Activated CD4-positive, alpha-beta T cell treated with anti-CD3 and anti-CD28 coated beads for 36 hours (primary cell): ENCODE measurements at regions of chr18 and their contacts with region 1.

Region 1: DNA sequence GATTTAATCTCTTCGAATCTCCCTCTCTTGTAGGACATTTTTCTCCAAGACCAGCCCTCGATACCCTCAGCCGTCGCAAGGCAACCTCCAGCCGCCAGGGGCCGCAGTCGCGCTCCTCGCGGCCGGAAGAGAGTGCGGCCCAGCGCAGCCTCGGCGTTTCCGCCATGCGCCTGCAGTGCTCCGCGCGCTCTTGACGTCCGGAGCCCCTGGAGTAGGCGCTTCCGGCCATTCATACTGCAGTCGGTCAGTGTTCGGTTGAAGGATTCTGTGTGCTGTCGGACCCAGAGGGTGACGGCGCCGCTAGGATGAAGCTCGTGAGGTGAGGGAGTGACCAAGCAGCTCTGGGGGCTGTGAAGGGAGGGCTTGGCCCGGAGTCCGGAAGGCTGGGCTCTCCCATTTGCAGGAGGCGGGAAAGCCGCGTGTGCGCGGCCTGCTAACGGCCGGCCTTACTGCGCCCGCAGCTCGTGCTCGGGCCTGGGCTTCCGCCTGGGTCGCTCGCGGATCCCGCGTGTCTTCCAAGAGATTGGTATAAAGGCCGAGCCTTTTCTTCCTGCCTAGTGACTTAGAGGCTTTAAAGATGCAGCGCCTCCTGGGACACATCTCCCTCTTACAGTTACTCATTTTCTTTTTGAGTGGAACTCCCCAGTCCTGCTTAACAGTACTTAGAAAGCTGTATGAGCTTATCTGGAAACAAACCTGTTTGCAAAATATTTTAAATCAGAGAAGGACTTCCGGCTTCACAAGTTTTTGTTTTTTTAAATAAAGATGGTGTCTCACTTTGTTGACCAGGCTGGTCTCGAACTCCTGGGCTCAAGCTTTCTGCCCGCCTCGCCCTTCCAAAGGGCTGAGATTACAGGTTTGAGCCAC is at the start of gene SNRPD1:
- DNase-seq: peak; percentile 93
- ATAC-seq: peak; percentile 98
- H3K4me3 Mint-ChIP-seq: peak within 1 kb of the TSS; percentile 92
- H3K27ac Mint-ChIP-seq: peak within 1 kb of the TSS; percentile 99
- H3K4me1 Mint-ChIP-seq: peaks cover 34% of the 10 kb centered on the region
- H3K27me3 Mint-ChIP-seq: no peaks in the 10 kb centered on the region
- total RNA-seq, gene SNRPD1: 79.9 to 163 TPM

Region 2: GRCh38 chr18:21629089-21629832 is 16.9 kb after region 1 on chr18:
- CTCF ChIA-PET with region 1: interaction called, 6 read pairs
- POLR2A ChIA-PET with region 1: interaction called, 5 read pairs
- intact Hi-C with region 1: loop called in 1 of 2 experiments (anchors 2 kb)
- DNase-seq: no peak
- ATAC-seq: no peak
- H3K4me3 Mint-ChIP-seq: no peak overlapping the region
- H3K27ac Mint-ChIP-seq: peak overlapping the region; percentile 84
- H3K4me1 Mint-ChIP-seq: peaks cover 11% of the 10 kb centered on the region
- H3K27me3 Mint-ChIP-seq: no peaks in the 10 kb centered on the region

Region 3: DNA sequence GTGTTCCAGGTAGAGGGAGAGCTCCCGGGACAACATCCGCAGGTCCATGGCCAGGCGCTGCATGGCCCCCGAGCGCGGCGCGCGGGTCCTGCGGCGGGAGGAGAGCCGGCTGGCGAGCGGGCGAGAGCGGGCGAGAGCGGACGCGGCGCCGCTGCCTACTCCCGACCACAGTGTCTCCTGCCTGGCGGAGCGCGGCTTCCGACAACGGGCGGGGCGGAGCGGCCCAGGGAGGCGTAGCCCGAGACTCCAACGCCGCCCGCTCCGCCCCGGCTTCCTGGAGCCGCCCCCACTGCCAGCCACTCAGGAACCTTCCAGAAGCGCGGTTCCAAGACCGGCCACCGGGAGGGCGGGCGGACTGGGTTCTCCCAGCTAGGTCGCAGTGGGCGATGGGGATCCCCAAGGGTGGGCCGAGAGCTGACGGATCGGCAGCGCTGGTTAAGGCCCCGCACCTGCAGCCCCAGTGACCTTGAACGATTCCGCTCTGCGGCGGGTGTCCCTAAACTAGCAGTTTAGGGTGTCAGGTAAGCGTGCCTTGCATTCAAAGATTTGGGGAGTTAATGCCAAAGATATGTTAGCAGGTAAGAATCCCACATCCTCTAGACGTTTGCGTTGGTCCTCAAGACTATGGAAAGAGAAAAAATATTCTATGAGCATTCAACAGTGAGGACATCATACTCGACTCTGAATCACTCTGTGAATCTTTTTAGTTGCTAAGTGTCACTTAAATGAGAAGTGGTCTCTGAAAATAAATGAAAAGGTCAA is 92.4 kb after region 1 on chr18 and contains the start of gene ABHD3:
- CTCF ChIA-PET with region 1: interaction called, 12 read pairs
- POLR2A ChIA-PET with region 1: no interaction called
- intact Hi-C with region 1: loop called (anchors 1 to 2 kb)
- DNase-seq: peak; percentile 93
- ATAC-seq: peak; percentile 95
- H3K4me3 Mint-ChIP-seq: peak within 1 kb of the TSS; percentile 87
- H3K27ac Mint-ChIP-seq: peak within 1 kb of the TSS; percentile 93
- H3K4me1 Mint-ChIP-seq: peaks cover 24% of the 10 kb centered on the region
- H3K27me3 Mint-ChIP-seq: no peaks in the 10 kb centered on the region
- total RNA-seq, gene ABHD3: 13.7 to 14.3 TPM

Region 4: GRCh38 chr18:21740724-21741510 is 128.6 kb after region 1 on chr18 and contains the start of gene MIB1:
- CTCF ChIA-PET with region 1: interaction called, 7 read pairs
- POLR2A ChIA-PET with region 1: no interaction called
- intact Hi-C with region 1: loop called (anchors 1 kb)
- DNase-seq: peak; percentile 62
- ATAC-seq: peak; percentile 73
- H3K4me3 Mint-ChIP-seq: peak within 1 kb of the TSS; percentile 93
- H3K27ac Mint-ChIP-seq: peak within 1 kb of the TSS; percentile 96
- H3K4me1 Mint-ChIP-seq: peaks cover 40% of the 10 kb centered on the region
- H3K27me3 Mint-ChIP-seq: no peaks in the 10 kb centered on the region
- total RNA-seq, gene MIB1: 24.7 to 33.6 TPM

Region 5: GRCh38 chr18:21865043-21865442 is 252.7 kb after region 1 on chr18:
- CTCF ChIA-PET with region 1: no interaction called
- POLR2A ChIA-PET with region 1: no interaction called
- intact Hi-C with region 1: no loop called
- DNase-seq: no peak
- ATAC-seq: no peak
- H3K4me3 Mint-ChIP-seq: no peak overlapping the region
- H3K27ac Mint-ChIP-seq: no peak overlapping the region
- H3K4me1 Mint-ChIP-seq: no peaks in the 10 kb centered on the region
- H3K27me3 Mint-ChIP-seq: no peaks in the 10 kb centered on the region

Region 6: DNA sequence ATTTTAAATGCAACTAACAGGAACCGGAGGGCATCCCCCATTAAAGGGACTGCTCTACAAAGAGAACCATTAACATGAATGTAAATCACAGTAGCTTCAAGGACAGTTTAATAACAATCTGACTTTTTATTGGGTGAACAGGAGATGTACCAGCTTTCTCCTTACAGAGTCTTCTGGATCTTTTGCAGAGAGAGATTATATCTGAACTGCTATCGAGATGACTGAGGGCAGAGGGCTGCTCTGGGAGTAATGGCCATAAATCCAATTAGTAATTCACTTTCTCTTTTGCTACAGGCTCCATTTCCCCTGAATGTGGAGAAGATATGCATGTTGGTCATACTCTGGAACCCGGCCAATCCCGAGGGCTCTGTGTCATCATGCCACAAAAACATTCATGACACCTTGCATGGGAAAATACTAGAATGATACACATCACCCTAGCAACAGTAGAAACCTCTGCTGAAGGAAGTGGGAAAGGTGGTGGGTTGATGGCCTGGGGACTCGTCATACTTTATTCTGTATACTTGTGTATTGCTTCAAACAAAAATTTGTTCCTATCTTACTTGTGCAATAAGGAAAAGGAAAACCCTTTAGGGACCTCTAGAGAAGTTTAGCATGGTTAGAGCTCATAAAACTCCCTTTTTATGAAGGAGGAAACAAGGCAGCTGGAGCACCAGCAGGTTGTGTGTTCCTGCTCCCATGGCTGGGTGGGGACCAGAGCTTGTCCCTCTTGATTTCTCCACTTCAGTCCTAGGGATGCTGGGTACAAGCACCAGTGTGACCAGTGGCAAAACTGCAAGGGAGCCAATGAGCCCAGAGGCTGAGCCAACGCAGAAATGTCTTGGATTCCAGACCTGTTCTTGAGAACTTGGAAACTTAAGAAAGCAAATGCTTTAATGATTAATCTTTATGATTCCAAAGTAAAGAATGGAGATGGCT is 779.3 kb after region 1 on chr18:
- CTCF ChIA-PET with region 1: no interaction called
- POLR2A ChIA-PET with region 1: no interaction called
- intact Hi-C with region 1: no loop called
- DNase-seq: peak; percentile 33
- ATAC-seq: no peak
- H3K4me3 Mint-ChIP-seq: no peak overlapping the region
- H3K27ac Mint-ChIP-seq: no peak overlapping the region
- H3K4me1 Mint-ChIP-seq: no peaks in the 10 kb centered on the region
- H3K27me3 Mint-ChIP-seq: no peaks in the 10 kb centered on the region